ENCODE measurements at regions of chrX and their contacts with region 1.

Region 1: DNA sequence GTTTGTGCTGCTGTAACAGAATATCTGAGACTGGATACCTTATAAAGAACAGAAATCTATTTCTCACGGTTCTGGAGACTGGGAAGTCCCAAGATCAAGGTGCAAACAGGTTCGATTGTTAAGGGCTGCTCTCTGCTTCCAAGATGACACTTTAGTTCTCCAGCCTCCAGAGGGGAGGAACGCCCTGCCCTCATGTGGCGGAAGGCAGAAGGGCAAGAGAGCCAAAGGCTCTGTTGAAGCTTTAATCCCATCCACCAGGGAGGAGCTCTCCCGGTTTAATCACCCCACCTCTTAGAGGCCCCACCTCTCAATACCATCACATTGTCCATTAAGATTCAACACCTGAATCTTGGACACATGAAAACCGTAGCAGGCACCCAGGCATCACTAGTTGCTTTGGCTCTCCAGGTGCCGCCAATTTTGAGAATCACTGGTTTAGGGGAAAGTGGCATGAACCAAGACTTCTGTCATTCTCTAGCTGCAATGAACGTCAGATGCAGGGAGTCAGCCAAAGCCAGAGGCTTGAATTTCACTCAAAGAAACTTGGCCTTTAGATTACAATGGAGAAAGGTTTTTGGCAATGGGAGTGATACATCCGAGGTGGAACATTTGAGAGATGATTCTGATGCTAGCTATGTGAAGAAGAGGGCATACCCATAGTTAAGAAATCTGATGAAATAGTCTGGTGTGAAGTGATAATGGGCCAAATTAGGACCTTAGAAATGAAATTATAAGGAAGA is 15.7 kb downstream of the FHL1 start:
- DNase-seq: no peak
- H3K4me3 ChIP-seq: no peak overlapping the region
- CTCF ChIP-seq: peak; percentile 76

Region 2: DNA sequence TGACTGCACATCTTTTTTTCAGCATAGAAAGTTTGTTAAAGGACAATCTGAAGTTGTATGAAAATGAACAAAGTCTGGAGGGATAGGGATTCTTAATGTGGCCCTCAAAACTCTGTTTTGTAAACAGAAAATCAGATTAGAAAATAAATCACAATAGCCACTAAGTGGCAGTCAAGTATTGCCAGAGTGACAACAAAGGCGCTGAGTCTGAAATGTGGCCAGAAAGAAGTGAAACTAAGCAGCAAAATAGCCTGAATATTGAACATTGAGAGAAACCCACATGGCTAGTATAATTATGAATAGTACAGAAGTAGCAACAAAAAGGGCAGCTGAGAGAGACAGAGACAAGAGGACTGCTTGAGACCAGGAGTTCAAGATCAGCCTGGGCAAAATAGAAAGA is 530.6 kb before region 1 on chrX:
- CTCF ChIA-PET with region 1: no interaction called
- POLR2A ChIA-PET with region 1: no interaction called
- DNase-seq: no peak
- H3K4me3 ChIP-seq: no peak overlapping the region
- CTCF ChIP-seq: no peak

Region 3: GRCh38 chrX:136039968-136040367 is 123.0 kb before region 1 on chrX:
- CTCF ChIA-PET with region 1: interaction called, 13 read pairs
- POLR2A ChIA-PET with region 1: no interaction called
- DNase-seq: no peak
- H3K4me3 ChIP-seq: no peak overlapping the region
- CTCF ChIP-seq: no peak

Region 4: GRCh38 chrX:136147315-136147901 is 15.6 kb before region 1 on chrX and contains the start of gene FHL1:
- CTCF ChIA-PET with region 1: interaction called, 10 read pairs
- POLR2A ChIA-PET with region 1: no interaction called
- DNase-seq: no peak
- H3K4me3 ChIP-seq: peak within 1 kb of the TSS; percentile 61
- CTCF ChIP-seq: no peak

Region 5: DNA sequence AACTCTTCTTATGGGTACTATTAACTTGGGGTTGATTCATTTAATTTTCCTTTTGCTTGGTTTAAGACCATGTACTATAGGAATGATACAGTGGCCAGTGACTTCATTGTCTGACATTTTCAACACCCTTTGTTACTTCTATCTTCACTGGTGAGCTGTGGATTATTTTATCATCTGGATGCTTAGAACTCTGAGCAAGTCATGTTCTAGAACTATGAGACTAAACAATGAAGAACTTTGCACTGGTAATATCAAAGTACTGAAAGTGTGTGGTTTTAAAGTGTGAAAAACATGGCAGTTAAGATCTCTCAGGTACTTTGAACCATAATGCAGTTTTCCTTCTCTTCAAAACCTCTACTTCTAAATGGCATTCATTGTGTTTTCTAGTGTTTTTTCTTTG is 40.4 kb after region 1 on chrX:
- CTCF ChIA-PET with region 1: interaction called, 24 read pairs
- POLR2A ChIA-PET with region 1: no interaction called
- DNase-seq: no peak
- H3K4me3 ChIP-seq: no peak overlapping the region
- CTCF ChIP-seq: no peak

Region 6: GRCh38 chrX:136209016-136209738 is 46.2 kb after region 1 on chrX:
- CTCF ChIA-PET with region 1: interaction called, 24 read pairs
- POLR2A ChIA-PET with region 1: no interaction called
- DNase-seq: no peak
- H3K4me3 ChIP-seq: no peak overlapping the region
- CTCF ChIP-seq: peak; percentile 57

Region 7: DNA sequence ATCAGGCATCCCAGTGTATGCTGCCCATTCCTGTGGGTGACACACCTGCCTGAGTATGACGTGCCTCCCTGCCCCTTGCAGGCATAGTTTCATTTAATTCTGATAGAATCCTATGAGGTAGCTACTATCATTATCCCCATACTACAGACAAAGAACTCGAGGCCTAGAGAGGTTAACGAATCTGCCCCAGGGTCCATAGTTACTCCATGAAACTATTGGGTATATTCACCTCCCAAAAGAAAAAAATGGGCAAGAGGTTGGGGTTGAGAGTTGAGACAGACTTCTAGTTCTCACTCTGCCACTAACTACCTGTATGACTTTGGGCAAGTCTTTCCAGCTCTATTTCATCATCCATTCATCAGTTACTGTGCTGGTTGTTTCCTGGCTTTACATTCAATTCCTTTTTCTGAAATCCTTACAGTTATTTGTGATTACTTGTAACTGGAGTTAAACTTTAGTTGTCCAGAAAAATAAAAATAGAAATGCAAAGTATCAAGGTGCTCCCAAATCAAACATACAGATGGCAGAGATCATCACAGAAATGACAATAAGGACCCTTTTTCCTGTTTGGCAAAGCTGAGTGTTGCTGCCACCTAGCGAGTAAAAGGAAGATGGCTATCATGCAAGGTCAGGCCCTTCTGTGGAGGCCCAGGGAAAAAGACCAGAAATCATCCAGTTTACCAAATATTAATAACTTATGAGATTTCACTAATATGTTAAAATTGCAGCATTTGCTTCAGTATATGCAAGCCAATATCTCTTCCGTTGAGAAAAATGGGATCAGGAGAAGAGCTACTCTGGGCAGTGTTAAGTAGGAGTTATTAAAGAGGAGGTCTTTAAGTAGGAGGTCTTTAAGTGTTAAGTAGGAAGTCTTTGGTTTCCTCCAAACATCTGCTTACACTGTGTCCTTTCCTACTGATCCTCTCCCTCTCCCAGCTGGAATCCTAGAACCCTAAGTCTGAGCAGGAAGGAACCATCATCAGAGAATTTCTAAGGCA is 105.3 kb after region 1 on chrX:
- CTCF ChIA-PET with region 1: interaction called, 33 read pairs
- POLR2A ChIA-PET with region 1: no interaction called
- DNase-seq: no peak
- H3K4me3 ChIP-seq: no peak overlapping the region
- CTCF ChIP-seq: peak; percentile 57

Measured in AG04449 (cell line).